Activated CD4-positive, alpha-beta T cell treated with anti-CD3 and anti-CD28 coated beads, Interleukin-2, amount 10 ng/mL, durations not matched to agents 7 days and 5 days (primary cell): ENCODE measurements at regions of chr1 and their contacts with region 1.

Region 1: GRCh38 chr1:223556414-223557129 is 108.9 kb downstream of the CAPN8 start:
- DNase-seq: peak; percentile 47
- H3K4me3 Mint-ChIP-seq: no peak overlapping the region
- H3K27ac Mint-ChIP-seq: no peak overlapping the region
- H3K4me1 Mint-ChIP-seq: peaks cover 4% of the 10 kb centered on the region
- H3K27me3 Mint-ChIP-seq: no peaks in the 10 kb centered on the region

Region 2: DNA sequence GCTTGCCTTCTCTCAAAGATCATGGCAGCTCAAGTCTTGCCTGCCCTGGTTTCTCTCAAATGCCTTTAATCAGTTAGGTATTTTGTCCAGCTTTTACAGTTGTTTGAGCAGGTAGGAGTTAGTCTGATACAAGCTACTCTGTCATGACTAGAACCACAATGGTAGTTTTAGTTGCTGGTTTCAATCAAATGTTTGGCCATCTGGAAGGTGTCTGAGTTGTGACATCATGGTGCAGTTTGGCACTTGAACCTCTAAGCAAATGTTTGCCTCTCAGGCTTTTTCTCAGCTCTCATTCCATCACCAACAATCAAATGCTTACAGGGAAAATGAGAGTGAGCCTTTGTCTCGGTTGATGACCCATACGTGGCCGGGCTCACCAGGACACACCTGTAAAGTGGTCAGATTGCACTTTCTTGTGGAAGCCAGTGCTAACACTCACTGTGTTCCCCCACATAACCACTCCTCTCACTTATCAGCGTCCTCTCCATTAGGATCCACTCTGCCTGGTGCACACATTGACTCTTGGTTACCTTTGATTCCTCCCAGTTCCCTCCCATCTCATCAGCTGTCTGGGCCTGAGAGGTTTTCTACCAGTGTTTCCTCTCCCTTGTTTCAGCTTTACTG is 95.9 kb before region 1 on chr1:
- CTCF ChIA-PET with region 1: no interaction called
- POLR2A ChIA-PET with region 1: no interaction called
- DNase-seq: no peak
- H3K4me3 Mint-ChIP-seq: no peak overlapping the region
- H3K27ac Mint-ChIP-seq: no peak overlapping the region
- H3K4me1 Mint-ChIP-seq: no peaks in the 10 kb centered on the region
- H3K27me3 Mint-ChIP-seq: no peaks in the 10 kb centered on the region

Region 3: GRCh38 chr1:223525957-223526356 is 30.6 kb before region 1 on chr1:
- CTCF ChIA-PET with region 1: no interaction called
- POLR2A ChIA-PET with region 1: no interaction called
- DNase-seq: no peak
- H3K4me3 Mint-ChIP-seq: no peak overlapping the region
- H3K27ac Mint-ChIP-seq: no peak overlapping the region
- H3K4me1 Mint-ChIP-seq: peaks cover 6% of the 10 kb centered on the region
- H3K27me3 Mint-ChIP-seq: no peaks in the 10 kb centered on the region

Region 4: DNA sequence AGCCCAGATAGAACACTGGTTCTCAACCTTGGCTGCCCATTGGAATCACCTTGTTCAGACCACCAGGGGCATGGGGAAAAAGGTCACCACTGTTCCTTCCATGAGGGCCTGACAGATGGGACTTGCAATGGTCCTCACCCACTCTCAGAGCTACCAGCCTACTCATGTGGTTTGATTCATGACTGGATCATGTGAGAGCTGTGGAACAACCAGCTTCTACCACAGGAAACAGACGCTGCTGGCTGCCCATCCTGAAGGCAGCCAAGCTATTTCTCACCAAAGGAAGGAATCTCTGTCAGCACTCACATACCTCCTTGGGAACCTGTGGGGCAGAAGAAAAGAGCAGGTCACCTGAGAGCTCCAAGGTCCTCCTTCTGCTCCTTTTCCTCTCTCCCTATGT is 55.4 kb after region 1 on chr1:
- CTCF ChIA-PET with region 1: interaction called, 14 read pairs
- POLR2A ChIA-PET with region 1: no interaction called
- DNase-seq: no peak
- H3K4me3 Mint-ChIP-seq: no peak overlapping the region
- H3K27ac Mint-ChIP-seq: no peak overlapping the region
- H3K4me1 Mint-ChIP-seq: no peaks in the 10 kb centered on the region
- H3K27me3 Mint-ChIP-seq: no peaks in the 10 kb centered on the region